Naive thymus-derived CD4-positive, alpha-beta T cell (primary cell): ENCODE measurements at regions of chr5 and their contacts with region 1.

Region 1: GRCh38 chr5:122774861-122775549 is at the start of gene SNX2:
- DNase-seq: peak; percentile 82 to 89 (median 87)
- ATAC-seq: peak; percentile 95
- H3K4me3 ChIP-seq: peak within 1 kb of the TSS; percentile 79
- H3K4me3 Mint-ChIP-seq: peak within 1 kb of the TSS; percentile 90 to 98 (median 95)
- H3K27ac ChIP-seq: peak within 1 kb of the TSS; percentile 86
- H3K27ac Mint-ChIP-seq: peak within 1 kb of the TSS; percentile 84 to 97 (median 94)
- H3K4me1 ChIP-seq: peaks cover 22 to 23% of the 10 kb centered on the region in 2 donors
- H3K4me1 Mint-ChIP-seq: peaks cover 26 to 57% (median 48%) of the 10 kb centered on the region in 7 donors
- H3K27me3 ChIP-seq: no peaks in the 10 kb centered on the region
- H3K27me3 Mint-ChIP-seq: peaks cover 0 to 16% (median under 1%) of the 10 kb centered on the region in 5 donors
- total RNA-seq, gene SNX2: 35.7 to 79.7 (median 49.5) TPM

Region 2: DNA sequence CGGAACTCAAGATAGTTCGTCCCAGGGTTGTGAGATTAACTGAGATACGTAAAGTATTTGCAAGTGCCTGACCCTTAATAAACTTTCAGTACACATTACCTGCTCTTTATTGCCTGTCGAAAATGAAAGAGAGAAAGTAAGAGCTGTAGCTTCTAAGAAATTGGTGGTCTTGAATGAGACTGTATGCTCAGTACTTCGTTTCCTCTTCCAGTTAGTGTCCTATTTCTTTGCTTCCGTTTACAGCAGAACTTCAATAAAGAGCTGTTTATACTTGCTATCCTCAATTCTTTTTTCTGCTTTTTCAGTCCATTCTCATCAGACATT is 812.7 kb before region 1 on chr5:
- CTCF ChIA-PET with region 1: no interaction called
- POLR2A ChIA-PET with region 1: no interaction called
- intact Hi-C with region 1: loop called (anchors 1 to 5 kb)
- DNase-seq: no peak
- ATAC-seq: no peak
- H3K4me3 ChIP-seq: peak overlapping the region; percentile 85
- H3K4me3 Mint-ChIP-seq: peak overlapping the region; percentile 95 to 99 (median 98)
- H3K27ac ChIP-seq: peak overlapping the region; percentile 73
- H3K27ac Mint-ChIP-seq: peak overlapping the region; percentile 93 to 98 (median 96)
- H3K4me1 ChIP-seq: peaks cover 9 to 16% of the 10 kb centered on the region in 2 donors
- H3K4me1 Mint-ChIP-seq: peaks cover 30 to 51% (median 47%) of the 10 kb centered on the region in 7 donors
- H3K27me3 ChIP-seq: no peaks in the 10 kb centered on the region
- H3K27me3 Mint-ChIP-seq: peaks cover 0 to 21% (median 9%) of the 10 kb centered on the region in 5 donors

Region 3: DNA sequence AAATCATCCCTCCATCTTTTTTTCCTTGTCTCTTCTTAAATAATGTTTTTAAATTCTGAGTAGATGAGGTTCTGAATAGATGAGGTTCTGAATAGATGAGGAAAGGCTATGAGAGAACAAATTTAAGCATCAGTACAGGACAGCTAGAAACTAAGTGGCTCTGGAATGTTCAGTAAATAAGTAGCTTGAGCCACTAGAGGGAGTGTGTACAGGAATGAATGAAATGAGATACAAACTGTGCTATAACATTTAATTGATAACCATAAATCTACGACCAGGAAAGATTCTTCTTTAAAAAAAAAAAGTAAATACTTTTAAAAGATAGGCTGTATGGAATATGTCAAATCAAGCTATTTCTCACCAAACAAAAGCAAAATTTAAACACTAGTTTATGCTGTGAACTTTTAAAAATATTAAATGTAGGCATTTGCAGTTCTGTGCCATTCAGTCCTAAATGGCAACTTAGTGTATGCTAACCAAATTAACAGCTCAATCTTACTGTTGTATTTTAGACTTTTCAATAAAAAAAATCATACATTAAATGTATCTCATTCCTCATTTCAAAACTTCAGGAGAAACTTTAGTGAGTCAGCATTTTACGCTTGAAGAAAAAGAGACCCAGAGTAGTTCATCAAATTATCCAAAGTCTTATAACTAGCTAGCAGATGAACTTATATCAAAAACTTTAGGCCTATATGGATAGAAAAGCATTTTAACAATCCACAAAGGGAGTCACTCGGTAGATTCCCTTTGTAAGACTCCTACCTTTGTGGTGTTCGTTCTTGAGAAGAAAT is 70.6 kb before region 1 on chr5:
- CTCF ChIA-PET with region 1: no interaction called
- POLR2A ChIA-PET with region 1: no interaction called
- intact Hi-C with region 1: loop called in 1 of 2 experiments (anchors 2 kb)
- DNase-seq: peak in 5 of 9 donors; percentile 4 to 13 (median 7)
- ATAC-seq: peak; percentile 41
- H3K4me3 ChIP-seq: no peak overlapping the region
- H3K4me3 Mint-ChIP-seq: no peak overlapping the region
- H3K27ac ChIP-seq: no peak overlapping the region
- H3K27ac Mint-ChIP-seq: no peak overlapping the region
- H3K4me1 ChIP-seq: no peaks in the 10 kb centered on the region
- H3K4me1 Mint-ChIP-seq: no peaks in the 10 kb centered on the region
- H3K27me3 ChIP-seq: no peaks in the 10 kb centered on the region
- H3K27me3 Mint-ChIP-seq: peaks cover 0 to 13% (median 5%) of the 10 kb centered on the region in 5 donors

Region 4: GRCh38 chr5:122756263-122756911 is 18.6 kb before region 1 on chr5:
- CTCF ChIA-PET with region 1: no interaction called
- POLR2A ChIA-PET with region 1: no interaction called
- intact Hi-C with region 1: loop called in 1 of 2 experiments (anchors 2 kb)
- DNase-seq: no peak
- ATAC-seq: peak; percentile 74
- H3K4me3 ChIP-seq: no peak overlapping the region
- H3K4me3 Mint-ChIP-seq: no peak overlapping the region
- H3K27ac ChIP-seq: no peak overlapping the region
- H3K27ac Mint-ChIP-seq: peak overlapping the region in 1 of 9 donors; percentile 19
- H3K4me1 ChIP-seq: no peaks in the 10 kb centered on the region
- H3K4me1 Mint-ChIP-seq: peaks cover 0 to 11% (median 0%) of the 10 kb centered on the region in 7 donors
- H3K27me3 ChIP-seq: no peaks in the 10 kb centered on the region
- H3K27me3 Mint-ChIP-seq: peaks cover 0 to 13% (median 6%) of the 10 kb centered on the region in 5 donors

Region 5: DNA sequence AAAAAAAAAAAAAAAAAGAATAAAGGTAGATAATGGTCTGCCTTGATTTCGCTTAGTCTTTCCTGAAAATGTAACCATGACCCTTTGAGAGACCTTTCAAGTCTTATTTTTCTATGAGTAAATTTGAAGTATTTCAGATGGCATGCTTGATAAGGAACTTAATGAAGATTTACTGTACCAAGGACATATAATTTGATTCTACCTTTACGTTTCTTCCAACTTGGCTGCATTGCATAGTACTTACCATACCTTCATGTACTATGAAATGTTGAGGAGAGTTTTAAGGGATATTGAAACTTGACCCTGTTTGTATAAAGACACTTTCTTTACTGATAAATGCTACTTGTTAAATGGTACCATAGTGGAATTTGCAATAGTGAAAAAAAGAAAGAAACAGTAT is 35.4 kb after region 1 on chr5:
- CTCF ChIA-PET with region 1: no interaction called
- POLR2A ChIA-PET with region 1: interaction called, 3 read pairs
- intact Hi-C with region 1: loop called in 1 of 2 experiments (anchors 5 kb)
- DNase-seq: no peak
- ATAC-seq: no peak
- H3K4me3 ChIP-seq: no peak overlapping the region
- H3K4me3 Mint-ChIP-seq: no peak overlapping the region
- H3K27ac ChIP-seq: no peak overlapping the region
- H3K27ac Mint-ChIP-seq: no peak overlapping the region
- H3K4me1 ChIP-seq: no peaks in the 10 kb centered on the region
- H3K4me1 Mint-ChIP-seq: peaks cover 0 to 5% (median 0%) of the 10 kb centered on the region in 7 donors
- H3K27me3 ChIP-seq: no peaks in the 10 kb centered on the region
- H3K27me3 Mint-ChIP-seq: no peaks in the 10 kb centered on the region

Region 6: DNA sequence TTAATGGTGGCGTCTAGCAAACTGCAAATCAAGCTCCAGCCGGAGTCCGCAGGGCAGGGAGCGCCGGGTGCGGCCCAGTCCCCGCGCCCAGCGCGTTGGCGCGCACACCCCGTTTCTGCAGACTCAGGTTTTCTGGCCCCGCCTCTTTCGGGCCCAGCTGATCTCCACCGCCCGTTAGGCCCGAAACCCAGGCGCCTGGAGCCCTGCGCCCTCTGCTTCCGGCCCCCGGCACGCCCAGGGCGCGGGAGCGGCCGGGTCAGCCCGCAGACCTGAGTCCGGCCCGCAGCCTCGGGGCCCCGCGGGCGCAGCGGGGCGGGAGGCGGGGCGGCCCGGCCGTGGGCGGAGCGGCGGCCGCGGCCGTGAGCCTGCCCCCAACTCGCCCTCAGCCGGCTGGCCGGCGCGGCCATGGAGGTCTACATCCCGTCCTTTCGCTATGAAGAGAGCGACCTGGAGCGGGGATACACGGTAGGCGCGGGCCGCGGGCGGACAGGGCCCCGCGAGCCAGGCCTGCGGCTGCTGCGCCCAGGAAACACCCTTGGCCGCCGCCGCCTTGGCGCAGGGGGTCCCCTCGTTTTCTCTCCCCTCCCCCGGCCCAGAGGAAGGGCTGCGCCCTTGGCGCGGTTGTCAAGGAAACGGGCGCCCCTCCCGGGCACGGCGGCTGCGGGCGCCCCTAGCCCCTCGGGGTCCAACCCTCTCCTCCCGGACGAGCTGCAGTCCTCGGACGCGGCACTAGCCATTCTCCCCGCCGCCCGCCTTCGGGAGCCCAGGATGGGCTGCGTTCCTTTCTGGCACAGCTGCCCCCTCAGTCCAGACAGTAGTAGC is 70.4 kb after region 1 on chr5 and contains the start of gene SNX24:
- CTCF ChIA-PET with region 1: no interaction called
- POLR2A ChIA-PET with region 1: interaction called, 10 read pairs
- intact Hi-C with region 1: loop called (anchors 1 to 2 kb)
- DNase-seq: peak; percentile 52 to 67 (median 63)
- ATAC-seq: peak; percentile 88
- H3K4me3 ChIP-seq: peak within 1 kb of the TSS; percentile 82
- H3K4me3 Mint-ChIP-seq: peak within 1 kb of the TSS; percentile 83 to 93 (median 89)
- H3K27ac ChIP-seq: peak within 1 kb of the TSS; percentile 65
- H3K27ac Mint-ChIP-seq: peak within 1 kb of the TSS; percentile 38 to 90 (median 78)
- H3K4me1 ChIP-seq: peaks cover 10 to 11% of the 10 kb centered on the region in 2 donors
- H3K4me1 Mint-ChIP-seq: peaks cover 19 to 40% (median 27%) of the 10 kb centered on the region in 7 donors
- H3K27me3 ChIP-seq: no peaks in the 10 kb centered on the region
- H3K27me3 Mint-ChIP-seq: peaks cover 3 to 35% (median 9%) of the 10 kb centered on the region in 5 donors
- total RNA-seq, gene SNX24: 1.3 to 3.5 (median 2.4) TPM